ENCODE measurements at regions of chr1 and their contacts with region 1.

Region 1: DNA sequence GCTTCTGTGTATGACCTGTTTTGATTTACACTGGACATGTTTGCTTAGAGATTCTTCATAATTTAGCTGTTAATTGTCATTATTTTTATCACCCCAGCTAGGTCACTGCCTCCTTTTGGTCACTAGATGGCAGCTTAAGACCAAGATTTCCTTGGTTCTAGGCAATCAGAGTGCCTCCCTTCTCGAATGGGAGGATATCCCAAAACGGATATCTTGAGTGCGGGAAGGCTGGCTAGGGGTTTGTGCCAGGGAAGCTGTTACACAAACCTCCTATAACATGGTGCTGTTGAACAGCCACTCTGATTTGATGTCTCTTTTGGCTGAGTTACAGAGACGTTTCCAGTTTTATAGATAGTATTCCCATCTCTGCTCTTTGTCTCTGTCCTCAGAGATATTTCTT is 283.5 kb downstream of the S1PR1 start:
- DNase-seq: peak; percentile 55
- ATAC-seq: peak; percentile 28
- H3K4me3 ChIP-seq: no peak overlapping the region
- H3K4me3 Mint-ChIP-seq: no peak overlapping the region
- H3K27ac ChIP-seq: no peak overlapping the region
- H3K27ac Mint-ChIP-seq: no peak overlapping the region
- H3K4me1 ChIP-seq: peaks cover 3 to 6% of the 10 kb centered on the region in 2 donors
- H3K4me1 Mint-ChIP-seq: peaks cover 6% of the 10 kb centered on the region
- H3K27me3 ChIP-seq: peaks cover 0 to 4% (median 0%) of the 10 kb centered on the region in 4 experiments
- H3K27me3 Mint-ChIP-seq: peaks cover 10% of the 10 kb centered on the region
- CTCF ChIP-seq: peak; percentile 73

Region 2: GRCh38 chr1:101506541-101507164 is 13.6 kb before region 1 on chr1:
- CTCF ChIA-PET with region 1: interaction called, 13 read pairs
- POLR2A ChIA-PET with region 1: no interaction called
- intact Hi-C with region 1: no loop called
- DNase-seq: peak; percentile 61
- ATAC-seq: no peak
- H3K4me3 ChIP-seq: no peak overlapping the region
- H3K4me3 Mint-ChIP-seq: no peak overlapping the region
- H3K27ac ChIP-seq: no peak overlapping the region
- H3K27ac Mint-ChIP-seq: no peak overlapping the region
- H3K4me1 ChIP-seq: no peaks in the 10 kb centered on the region
- H3K4me1 Mint-ChIP-seq: no peaks in the 10 kb centered on the region
- H3K27me3 ChIP-seq: no peaks in the 10 kb centered on the region
- H3K27me3 Mint-ChIP-seq: no peaks in the 10 kb centered on the region
- CTCF ChIP-seq: peak; percentile 89

Region 3: GRCh38 chr1:101547357-101547756 is 27.1 kb after region 1 on chr1:
- CTCF ChIA-PET with region 1: no interaction called
- POLR2A ChIA-PET with region 1: no interaction called
- intact Hi-C with region 1: no loop called
- DNase-seq: no peak
- ATAC-seq: no peak
- H3K4me3 ChIP-seq: no peak overlapping the region
- H3K4me3 Mint-ChIP-seq: no peak overlapping the region
- H3K27ac ChIP-seq: no peak overlapping the region
- H3K27ac Mint-ChIP-seq: no peak overlapping the region
- H3K4me1 ChIP-seq: no peaks in the 10 kb centered on the region
- H3K4me1 Mint-ChIP-seq: no peaks in the 10 kb centered on the region
- H3K27me3 ChIP-seq: no peaks in the 10 kb centered on the region
- H3K27me3 Mint-ChIP-seq: peaks cover 12% of the 10 kb centered on the region
- CTCF ChIP-seq: no peak

Region 4: DNA sequence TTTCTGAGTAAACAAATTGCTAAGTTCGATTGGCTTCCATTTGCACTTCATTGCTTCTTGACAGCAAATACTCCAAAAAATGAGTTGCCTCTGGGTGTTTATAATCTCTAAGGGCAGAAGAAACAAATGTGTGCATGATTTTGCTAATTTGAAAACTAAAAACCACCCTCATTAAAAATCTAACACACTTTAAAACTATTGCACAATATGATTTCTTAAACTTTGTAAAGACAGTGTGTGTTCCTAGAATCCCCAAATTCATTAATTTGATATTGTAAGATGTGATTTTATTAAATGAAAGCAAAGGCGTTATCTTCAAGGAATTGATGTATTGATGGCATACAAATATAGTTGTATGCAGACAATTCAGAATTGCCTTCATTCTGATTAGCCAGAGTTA is 125.5 kb after region 1 on chr1:
- CTCF ChIA-PET with region 1: no interaction called
- POLR2A ChIA-PET with region 1: no interaction called
- intact Hi-C with region 1: no loop called
- DNase-seq: no peak
- ATAC-seq: no peak
- H3K4me3 ChIP-seq: no peak overlapping the region
- H3K4me3 Mint-ChIP-seq: no peak overlapping the region
- H3K27ac ChIP-seq: no peak overlapping the region
- H3K27ac Mint-ChIP-seq: no peak overlapping the region
- H3K4me1 ChIP-seq: no peaks in the 10 kb centered on the region
- H3K4me1 Mint-ChIP-seq: no peaks in the 10 kb centered on the region
- H3K27me3 ChIP-seq: no peaks in the 10 kb centered on the region
- H3K27me3 Mint-ChIP-seq: no peaks in the 10 kb centered on the region
- CTCF ChIP-seq: no peak